HEK293 (cell line): ENCODE measurements at regions of chr1 and their contacts with region 1.

Region 1: GRCh38 chr1:160777486-160778089 is 18.4 kb upstream of the LY9 start:
- H3K4me3 ChIP-seq: no peak overlapping the region
- H3K27ac ChIP-seq: no peak overlapping the region
- H3K4me1 ChIP-seq: no peaks in the 10 kb centered on the region
- CTCF ChIP-seq: no peak

Region 2: GRCh38 chr1:160078512-160079195 is 698.9 kb before region 1 on chr1:
- CTCF ChIA-PET with region 1: no interaction called
- POLR2A ChIA-PET with region 1: no interaction called
- H3K4me3 ChIP-seq: no peak overlapping the region
- H3K27ac ChIP-seq: no peak overlapping the region
- H3K4me1 ChIP-seq: no peaks in the 10 kb centered on the region
- CTCF ChIP-seq: peak; percentile 76

Region 3: GRCh38 chr1:160797861-160798273 is 20.3 kb after region 1 on chr1:
- CTCF ChIA-PET with region 1: interaction called, 12 read pairs
- POLR2A ChIA-PET with region 1: no interaction called
- H3K4me3 ChIP-seq: no peak overlapping the region
- H3K27ac ChIP-seq: no peak overlapping the region
- H3K4me1 ChIP-seq: no peaks in the 10 kb centered on the region
- CTCF ChIP-seq: no peak

Region 4: GRCh38 chr1:160862203-160863060 is 84.8 kb after region 1 on chr1 and contains the start of gene CD244:
- CTCF ChIA-PET with region 1: no interaction called
- POLR2A ChIA-PET with region 1: no interaction called
- H3K4me3 ChIP-seq: no peak within 1 kb of the TSS
- H3K27ac ChIP-seq: no peak within 1 kb of the TSS
- H3K4me1 ChIP-seq: no peaks in the 10 kb centered on the region
- CTCF ChIP-seq: no peak